GM12878 (cell line): ENCODE measurements at regions of chr22 and their contacts with region 1.

Region 1: DNA sequence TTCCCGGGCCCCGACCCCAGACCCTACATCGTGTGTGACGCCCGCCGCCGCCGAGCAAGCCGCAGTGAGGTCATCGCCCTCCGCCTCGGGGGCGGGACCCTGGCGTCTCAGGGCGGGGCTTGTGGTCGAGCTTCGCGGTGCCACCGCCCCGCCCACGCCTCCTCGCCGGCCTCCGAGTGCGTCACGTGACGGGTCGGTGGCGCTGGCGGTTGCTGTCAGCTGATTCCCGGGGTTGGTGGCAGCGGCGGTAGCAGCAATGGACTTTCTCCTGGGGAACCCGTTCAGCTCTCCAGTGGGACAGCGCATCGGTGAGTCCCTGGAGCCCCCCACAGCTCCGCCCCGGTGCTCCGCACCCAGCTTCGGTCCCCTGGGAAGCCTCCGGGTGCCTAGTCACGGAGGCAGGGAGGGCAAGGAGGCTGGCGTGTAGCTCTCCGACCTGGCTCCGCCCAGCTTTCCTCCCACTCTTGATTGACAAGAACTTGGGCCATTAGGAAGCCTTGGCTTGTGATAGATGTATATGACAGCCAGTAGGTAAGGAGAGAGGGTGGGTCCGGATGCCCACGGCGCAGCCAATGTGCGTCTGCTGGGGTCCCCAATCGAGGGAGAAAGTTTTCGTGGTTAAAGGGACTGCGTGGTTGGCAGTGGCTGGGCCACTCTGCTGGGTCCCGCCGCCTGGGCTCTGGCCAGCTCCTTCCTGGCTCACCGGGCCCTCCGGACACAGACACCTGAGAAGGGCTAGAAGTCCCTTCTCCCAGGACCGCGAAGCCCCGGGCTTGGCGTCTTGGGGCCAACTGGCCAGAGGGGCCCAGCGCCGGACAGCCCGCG is at the start of gene TOM1:
- DNase-seq: peak; percentile 94
- ATAC-seq: peak; percentile 99
- H3K4me3 ChIP-seq: peak within 1 kb of the TSS; percentile 80
- H3K27ac ChIP-seq: peak within 1 kb of the TSS; percentile 70
- H3K4me1 ChIP-seq: peaks cover 4% of the 10 kb centered on the region
- H3K27me3 ChIP-seq: no peaks in the 10 kb centered on the region
- CTCF ChIP-seq: no peak
- EP300 ChIP-seq: peak; percentile 31 to 61; a peak in 2 of 4 replicates
- POLR2A ChIP-seq: peak; percentile 83
- RAD21 ChIP-seq: no peak
- polyA plus RNA-seq, gene TOM1: 2.2 to 2.9 TPM

Region 2: GRCh38 chr22:34850010-34850409 is 449.9 kb before region 1 on chr22:
- CTCF ChIA-PET with region 1: no interaction called
- POLR2A ChIA-PET with region 1: no interaction called
- RAD21 ChIA-PET with region 1: no interaction called
- SMC1A ChIA-PET with region 1: no interaction called
- in situ Hi-C with region 1: no loop called
- intact Hi-C with region 1: no loop called
- DNase-seq: no peak
- ATAC-seq: no peak
- H3K4me3 ChIP-seq: no peak overlapping the region
- H3K27ac ChIP-seq: no peak overlapping the region
- H3K4me1 ChIP-seq: no peaks in the 10 kb centered on the region
- H3K27me3 ChIP-seq: no peaks in the 10 kb centered on the region; a peak in 1 of 4 replicates
- CTCF ChIP-seq: no peak
- EP300 ChIP-seq: no peak
- POLR2A ChIP-seq: no peak
- RAD21 ChIP-seq: no peak

Region 3: GRCh38 chr22:35008213-35008612 is 291.7 kb before region 1 on chr22:
- CTCF ChIA-PET with region 1: no interaction called
- POLR2A ChIA-PET with region 1: no interaction called
- RAD21 ChIA-PET with region 1: no interaction called
- SMC1A ChIA-PET with region 1: no interaction called
- in situ Hi-C with region 1: no loop called
- intact Hi-C with region 1: no loop called
- DNase-seq: peak; percentile 41
- ATAC-seq: peak; percentile 90
- H3K4me3 ChIP-seq: no peak overlapping the region
- H3K27ac ChIP-seq: no peak overlapping the region
- H3K4me1 ChIP-seq: peaks cover 9% of the 10 kb centered on the region
- H3K27me3 ChIP-seq: no peaks in the 10 kb centered on the region
- CTCF ChIP-seq: no peak
- EP300 ChIP-seq: no peak
- POLR2A ChIP-seq: no peak
- RAD21 ChIP-seq: no peak

Region 4: GRCh38 chr22:35312198-35313059 is 12.5 kb after region 1 on chr22:
- CTCF ChIA-PET with region 1: interaction called, 4 read pairs
- POLR2A ChIA-PET with region 1: interaction called, 23 read pairs
- RAD21 ChIA-PET with region 1: interaction called, 11 read pairs
- SMC1A ChIA-PET with region 1: interaction called, 23 read pairs
- in situ Hi-C with region 1: no loop called
- intact Hi-C with region 1: no loop called
- DNase-seq: no peak
- ATAC-seq: no peak
- H3K4me3 ChIP-seq: no peak overlapping the region
- H3K27ac ChIP-seq: peak overlapping the region; percentile 72
- H3K4me1 ChIP-seq: peaks cover 61% of the 10 kb centered on the region
- H3K27me3 ChIP-seq: no peaks in the 10 kb centered on the region
- CTCF ChIP-seq: no peak
- EP300 ChIP-seq: no peak
- POLR2A ChIP-seq: no peak
- RAD21 ChIP-seq: no peak